ENCODE measurements at regions of chr10 and their contacts with region 1.

Region 1: GRCh38 chr10:4241724-4242345 is 456.8 kb upstream of the KLF6 start:
- DNase-seq: no peak

Region 2: GRCh38 chr10:3785257-3785850 is 456.5 kb before region 1 on chr10:
- intact Hi-C with region 1: loop called (anchors 10 kb)
- DNase-seq: peak; percentile 100

Region 3: GRCh38 chr10:4195213-4195612 is 46.6 kb before region 1 on chr10:
- intact Hi-C with region 1: no loop called
- DNase-seq: no peak

Region 4: GRCh38 chr10:4361581-4361980 is 119.7 kb after region 1 on chr10:
- intact Hi-C with region 1: no loop called
- DNase-seq: no peak